Vagina (tissue), 2 donors: ENCODE measurements at regions of chr3 and their contacts with region 1.

Region 1: GRCh38 chr3:52001443-52001974 is 5.8 kb upstream of the RPL29 start:
- DNase-seq: no peak
- H3K4me3 ChIP-seq: no peak overlapping the region
- H3K27ac ChIP-seq: no peak overlapping the region
- H3K4me1 ChIP-seq: peaks cover 32% of the 10 kb centered on the region
- H3K27me3 ChIP-seq: no peaks in the 10 kb centered on the region
- CTCF ChIP-seq: peak; percentile 96 to 99 (median 97)
- POLR2A ChIP-seq: no peak

Region 2: GRCh38 chr3:51819709-51820406 is 181.7 kb before region 1 on chr3:
- intact Hi-C with region 1: no loop called
- DNase-seq: no peak
- H3K4me3 ChIP-seq: no peak overlapping the region
- H3K27ac ChIP-seq: no peak overlapping the region
- H3K4me1 ChIP-seq: no peaks in the 10 kb centered on the region
- H3K27me3 ChIP-seq: no peaks in the 10 kb centered on the region
- CTCF ChIP-seq: no peak
- POLR2A ChIP-seq: no peak

Region 3: DNA sequence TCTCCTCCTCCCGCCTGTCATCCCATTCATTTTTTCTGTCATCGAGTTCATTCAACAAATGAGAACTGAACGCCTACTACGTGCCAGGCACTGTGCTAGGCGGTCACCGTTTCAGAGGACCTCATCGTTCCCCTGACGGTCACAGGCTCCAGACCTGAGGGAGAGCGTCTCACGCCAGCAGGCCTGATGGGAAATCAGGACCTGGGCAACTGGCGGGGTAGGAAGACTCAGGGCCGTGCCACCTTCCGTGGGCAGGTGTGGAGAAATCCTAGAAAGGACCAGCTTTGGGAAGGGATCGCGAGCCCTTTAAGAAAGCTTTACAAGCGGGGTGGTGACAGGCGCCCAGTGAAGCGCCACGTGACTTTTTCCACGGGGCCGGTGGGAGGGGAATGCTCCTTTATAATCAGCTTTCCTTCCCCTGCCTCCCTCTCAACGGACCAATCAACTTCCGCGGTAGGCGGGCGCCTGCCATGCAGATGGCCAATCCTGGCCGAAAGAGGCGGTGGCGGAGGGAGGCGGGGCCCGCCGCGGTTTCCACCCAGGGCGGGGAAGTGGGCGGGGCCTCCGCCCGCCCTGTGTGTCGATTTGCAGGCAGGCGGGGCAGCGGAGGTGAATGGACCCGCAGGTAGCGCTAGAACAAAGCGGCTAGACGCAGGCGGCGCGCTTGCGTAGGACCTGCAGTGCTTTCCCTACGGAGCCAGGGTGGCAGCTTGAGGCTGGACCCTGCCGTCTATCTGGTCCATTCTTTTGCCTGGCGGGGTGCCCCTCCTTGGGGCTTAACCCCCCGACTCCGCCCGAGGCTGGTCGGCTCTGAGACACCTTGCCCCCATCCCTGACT is 55.7 kb after region 1 on chr3:
- intact Hi-C with region 1: loop called (anchors 5 kb)
- DNase-seq: peak; percentile 100
- H3K4me3 ChIP-seq: peak overlapping the region; percentile 73 to 75
- H3K27ac ChIP-seq: peak overlapping the region; percentile 98
- H3K4me1 ChIP-seq: peaks cover 46% of the 10 kb centered on the region
- H3K27me3 ChIP-seq: no peaks in the 10 kb centered on the region
- CTCF ChIP-seq: no peak
- POLR2A ChIP-seq: peak in 1 of 2 donors; percentile 22

Region 4: GRCh38 chr3:52123106-52123725 is 121.7 kb after region 1 on chr3:
- intact Hi-C with region 1: loop called (anchors 5 kb)
- DNase-seq: no peak
- H3K4me3 ChIP-seq: no peak overlapping the region
- H3K27ac ChIP-seq: peak overlapping the region; percentile 13
- H3K4me1 ChIP-seq: peaks cover 26% of the 10 kb centered on the region
- H3K27me3 ChIP-seq: no peaks in the 10 kb centered on the region
- CTCF ChIP-seq: peak; percentile 76 to 93 (median 83)
- POLR2A ChIP-seq: no peak

Region 5: DNA sequence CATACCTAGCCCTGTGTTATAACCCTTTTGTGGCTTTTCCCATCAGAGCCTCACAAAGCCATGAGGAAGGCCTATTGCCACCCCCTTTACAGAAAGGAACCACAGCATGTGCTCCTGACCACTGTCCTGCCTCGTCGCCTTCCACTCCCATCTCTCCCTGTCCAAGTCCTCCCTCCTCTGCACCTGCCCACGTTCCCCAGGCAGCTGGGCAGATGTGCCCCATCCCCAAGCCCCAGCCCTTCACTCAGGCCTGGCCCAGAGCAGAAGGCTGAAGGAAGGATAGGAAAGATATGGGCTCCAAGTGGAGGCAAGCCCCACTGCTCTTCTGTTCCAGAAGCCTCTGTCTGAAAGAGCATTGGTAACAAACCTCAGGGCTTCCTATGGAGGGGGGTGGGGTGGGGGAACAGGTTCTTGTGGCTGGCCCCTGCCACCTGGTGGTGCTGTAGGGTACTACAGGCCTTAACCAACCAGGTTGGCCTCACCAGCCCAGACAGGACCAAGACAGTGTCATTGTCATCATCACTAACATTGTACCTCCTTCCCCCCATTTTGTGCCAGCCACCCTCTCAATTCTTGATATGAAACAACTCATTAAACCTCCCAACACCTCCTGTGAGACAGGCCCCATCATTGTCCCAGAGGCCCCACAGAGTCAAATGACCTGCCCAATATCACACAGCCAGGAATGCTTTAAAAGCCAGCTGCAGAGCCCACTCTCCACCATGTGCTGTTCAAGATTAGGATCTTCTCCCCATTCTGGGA is 142.7 kb after region 1 on chr3:
- intact Hi-C with region 1: loop called (anchors 5 kb)
- DNase-seq: peak in 1 of 2 donors; percentile 88
- H3K4me3 ChIP-seq: no peak overlapping the region
- H3K27ac ChIP-seq: no peak overlapping the region
- H3K4me1 ChIP-seq: peaks cover 4% of the 10 kb centered on the region
- H3K27me3 ChIP-seq: no peaks in the 10 kb centered on the region
- CTCF ChIP-seq: peak; percentile 95 to 99 (median 99)
- POLR2A ChIP-seq: no peak